HepG2 (cell line): ENCODE measurements at regions of chr3 and their contacts with region 1.

Region 1: GRCh38 chr3:53160660-53161449 is at the start of gene PRKCD:
- DNase-seq: peak; percentile 54
- ATAC-seq: peak; percentile 74
- H3K4me3 ChIP-seq: peak within 1 kb of the TSS; percentile 87 to 97 (median 94)
- H3K27ac ChIP-seq: peak within 1 kb of the TSS; percentile 70
- H3K4me1 ChIP-seq: peaks cover 67% of the 10 kb centered on the region
- H3K27me3 ChIP-seq: peaks cover 0 to under 1% of the 10 kb centered on the region in 2 experiments; a peak in 1 of 5 replicates
- CTCF ChIP-seq: peak; percentile 27; the same call in 1 of the 2 replicates
- EP300 ChIP-seq: no peak
- POLR2A ChIP-seq: 0 out of 4 replicates have a peak, but pooled peaks of 1 of the 2 experiments have one; percentile 35
- RAD21 ChIP-seq: peak; percentile 30; the same call in 1 of the 2 replicates
- total RNA-seq, gene PRKCD: 1.6 and 4.3 TPM in 2 replicates

Region 2: DNA sequence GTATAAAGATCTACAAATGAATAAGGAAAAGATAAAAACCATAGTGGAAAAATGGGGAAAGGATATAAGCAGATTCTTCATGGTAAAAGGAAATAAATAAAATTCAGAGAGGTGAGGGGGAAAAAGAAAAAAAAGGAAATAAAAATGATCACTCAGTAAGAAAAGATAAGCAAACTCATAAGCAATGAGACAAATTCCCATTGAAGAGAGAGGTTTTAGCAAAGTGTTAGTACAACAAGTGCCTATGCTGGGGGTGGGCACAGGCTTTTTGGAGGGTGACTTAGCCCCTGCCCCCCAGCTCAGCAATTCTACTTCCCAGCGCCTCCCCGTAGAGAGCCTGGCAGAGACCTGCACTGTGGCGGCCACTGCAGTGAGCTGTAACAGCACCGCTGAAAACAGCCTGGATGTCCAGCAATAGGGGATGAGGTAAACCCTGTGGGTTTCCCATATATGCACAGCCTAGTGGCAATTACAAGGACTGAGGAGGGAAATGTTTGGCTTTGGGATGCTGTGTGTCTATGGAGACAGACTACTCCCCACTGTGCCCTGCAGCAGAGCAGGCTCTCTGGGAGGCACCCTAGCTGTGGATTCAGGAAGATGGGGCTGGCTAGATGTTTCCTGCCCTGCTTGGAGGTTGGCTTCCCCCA is 91.3 kb before region 1 on chr3:
- CTCF ChIA-PET with region 1: no interaction called
- POLR2A ChIA-PET with region 1: no interaction called
- in situ Hi-C with region 1: no loop called
- intact Hi-C with region 1: no loop called
- DNase-seq: no peak
- ATAC-seq: no peak
- H3K4me3 ChIP-seq: no peak overlapping the region
- H3K27ac ChIP-seq: no peak overlapping the region
- H3K4me1 ChIP-seq: peaks cover 27% of the 10 kb centered on the region
- H3K27me3 ChIP-seq: peaks cover 0 to 2% of the 10 kb centered on the region in 2 experiments; a peak in 2 of 5 replicates
- CTCF ChIP-seq: no peak
- EP300 ChIP-seq: no peak
- POLR2A ChIP-seq: no peak
- RAD21 ChIP-seq: no peak

Region 3: GRCh38 chr3:53130179-53131061 is 30.4 kb before region 1 on chr3 and contains the start of gene RFT1:
- CTCF ChIA-PET with region 1: interaction called, 7 read pairs
- POLR2A ChIA-PET with region 1: interaction called, 75 read pairs
- in situ Hi-C with region 1: no loop called
- intact Hi-C with region 1: no loop called
- DNase-seq: peak; percentile 93
- ATAC-seq: peak; percentile 88
- H3K4me3 ChIP-seq: peak within 1 kb of the TSS; percentile 80 to 99 (median 86)
- H3K27ac ChIP-seq: peak within 1 kb of the TSS; percentile 75
- H3K4me1 ChIP-seq: peaks cover 52% of the 10 kb centered on the region
- H3K27me3 ChIP-seq: no peaks in the 10 kb centered on the region; a peak in 1 of 5 replicates
- CTCF ChIP-seq: no peak; the same call in 1 of the 2 replicates
- EP300 ChIP-seq: peak in 1 of 2 experiments; percentile 27; a peak in 1 of 4 replicates
- POLR2A ChIP-seq: peak; percentile 91
- RAD21 ChIP-seq: peak; percentile 23
- total RNA-seq, gene RFT1: 25.7 and 37.0 TPM in 2 replicates

Region 4: GRCh38 chr3:53140847-53141845 is 19.7 kb before region 1 on chr3:
- CTCF ChIA-PET with region 1: no interaction called
- POLR2A ChIA-PET with region 1: interaction called, 75 read pairs
- in situ Hi-C with region 1: no loop called
- intact Hi-C with region 1: no loop called
- DNase-seq: no peak
- ATAC-seq: no peak; the same call in 2 of the 3 replicates
- H3K4me3 ChIP-seq: no peak overlapping the region
- H3K27ac ChIP-seq: no peak overlapping the region
- H3K4me1 ChIP-seq: peaks cover 62% of the 10 kb centered on the region
- H3K27me3 ChIP-seq: peaks cover 0 to 35% of the 10 kb centered on the region in 2 experiments; a peak in 3 of 5 replicates
- CTCF ChIP-seq: no peak
- EP300 ChIP-seq: no peak
- POLR2A ChIP-seq: no peak
- RAD21 ChIP-seq: no peak

Region 5: DNA sequence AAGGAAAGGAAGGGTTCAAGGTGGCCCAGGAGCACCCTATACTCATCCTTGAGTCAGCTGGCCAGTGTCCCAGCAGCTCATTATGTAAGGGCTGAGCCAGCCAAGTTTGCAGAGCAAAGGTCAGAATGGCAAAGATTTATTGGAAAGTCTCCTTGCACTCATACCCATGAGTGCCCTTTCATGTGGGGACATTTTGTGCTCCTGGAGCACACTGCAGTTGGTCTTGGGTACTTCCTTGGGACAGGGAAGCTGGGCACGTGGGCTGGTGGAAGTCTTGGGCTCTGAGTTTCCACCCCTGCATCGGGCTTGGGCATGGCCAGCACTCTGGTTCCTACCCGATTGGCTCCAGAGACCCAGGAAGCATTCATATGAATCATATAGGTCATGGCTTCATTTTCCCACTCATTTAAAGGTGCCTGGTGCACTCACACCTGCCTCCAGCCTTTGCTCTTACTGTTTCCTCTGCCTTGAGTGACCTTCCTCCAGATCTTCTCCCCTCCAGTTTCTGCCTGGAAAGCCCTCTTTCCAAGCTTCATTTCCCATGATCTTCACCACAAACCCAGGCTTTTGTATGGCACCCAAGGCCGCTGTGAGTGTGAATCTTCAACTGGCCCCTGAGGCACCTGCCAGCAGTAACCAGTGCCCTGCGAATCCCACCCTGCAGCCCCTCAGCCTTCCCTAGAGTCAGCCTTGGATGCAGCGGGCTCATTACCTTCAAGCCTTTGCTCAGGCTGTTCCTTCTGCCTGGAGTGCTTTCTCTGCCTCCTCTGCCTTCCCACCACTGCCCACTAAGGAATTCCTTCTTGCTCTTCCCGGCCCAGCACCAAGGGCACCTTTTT is 10.4 kb before region 1 on chr3:
- CTCF ChIA-PET with region 1: no interaction called
- POLR2A ChIA-PET with region 1: interaction called, 31 read pairs
- in situ Hi-C with region 1: no loop called
- intact Hi-C with region 1: no loop called
- DNase-seq: no peak
- ATAC-seq: no peak
- H3K4me3 ChIP-seq: no peak overlapping the region
- H3K27ac ChIP-seq: no peak overlapping the region
- H3K4me1 ChIP-seq: peaks cover 60% of the 10 kb centered on the region
- H3K27me3 ChIP-seq: peaks cover 2 to 57% of the 10 kb centered on the region in 2 experiments; a peak in 4 of 5 replicates
- CTCF ChIP-seq: no peak
- EP300 ChIP-seq: no peak
- POLR2A ChIP-seq: no peak
- RAD21 ChIP-seq: no peak

Region 6: GRCh38 chr3:53202331-53203015 is 41.6 kb after region 1 on chr3:
- CTCF ChIA-PET with region 1: no interaction called
- POLR2A ChIA-PET with region 1: no interaction called
- in situ Hi-C with region 1: no loop called
- intact Hi-C with region 1: no loop called
- DNase-seq: no peak
- ATAC-seq: peak; percentile 35
- H3K4me3 ChIP-seq: no peak overlapping the region
- H3K27ac ChIP-seq: no peak overlapping the region
- H3K4me1 ChIP-seq: peaks cover 14% of the 10 kb centered on the region
- H3K27me3 ChIP-seq: no peaks in the 10 kb centered on the region
- CTCF ChIP-seq: no peak
- EP300 ChIP-seq: no peak
- POLR2A ChIP-seq: no peak
- RAD21 ChIP-seq: no peak

Region 7: DNA sequence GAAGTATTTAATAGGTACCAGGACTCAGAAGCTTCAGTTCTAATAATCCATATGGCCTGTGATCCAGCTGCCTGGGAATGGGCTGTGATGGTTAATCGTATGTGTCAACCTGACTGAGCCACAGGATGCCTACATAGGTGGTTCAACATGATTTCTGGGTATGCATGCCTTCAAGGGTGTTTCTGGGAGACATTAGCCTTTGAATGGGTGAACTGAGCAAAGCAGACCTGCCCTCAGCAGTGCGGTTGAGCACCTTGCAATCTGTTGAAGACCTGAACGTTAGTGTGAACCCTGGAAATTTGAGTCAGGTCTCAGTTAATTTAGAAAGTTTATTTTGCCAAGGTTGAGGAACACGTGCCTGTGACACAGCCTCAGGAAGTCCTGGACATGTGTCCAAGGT is 117.8 kb after region 1 on chr3:
- CTCF ChIA-PET with region 1: no interaction called
- POLR2A ChIA-PET with region 1: no interaction called
- in situ Hi-C with region 1: no loop called
- intact Hi-C with region 1: no loop called
- DNase-seq: no peak
- ATAC-seq: no peak; the same call in 2 of the 3 replicates
- H3K4me3 ChIP-seq: no peak overlapping the region
- H3K27ac ChIP-seq: no peak overlapping the region
- H3K4me1 ChIP-seq: no peaks in the 10 kb centered on the region
- H3K27me3 ChIP-seq: no peaks in the 10 kb centered on the region
- CTCF ChIP-seq: no peak
- EP300 ChIP-seq: no peak
- POLR2A ChIP-seq: no peak
- RAD21 ChIP-seq: no peak